ENCODE measurements at regions of chr1 and their contacts with region 1.

Region 1: GRCh38 chr1:53837924-53838652 is at the start of gene NDC1:
- DNase-seq: peak; percentile 84 to 95 (median 92)
- ATAC-seq: peak; percentile 95
- H3K4me3 ChIP-seq: peak within 1 kb of the TSS; percentile 92
- H3K4me3 Mint-ChIP-seq: peak within 1 kb of the TSS; percentile 96 to 100 (median 99)
- H3K27ac ChIP-seq: peak within 1 kb of the TSS; percentile 95
- H3K27ac Mint-ChIP-seq: peak within 1 kb of the TSS; percentile 96 to 99 (median 98)
- H3K4me1 ChIP-seq: no peaks in the 10 kb centered on the region
- H3K4me1 Mint-ChIP-seq: peaks cover 10 to 41% (median 30%) of the 10 kb centered on the region in 7 donors
- H3K27me3 ChIP-seq: no peaks in the 10 kb centered on the region
- H3K27me3 Mint-ChIP-seq: no peaks in the 10 kb centered on the region
- total RNA-seq, gene NDC1: 6.9 to 20.2 (median 13.2) TPM

Region 2: DNA sequence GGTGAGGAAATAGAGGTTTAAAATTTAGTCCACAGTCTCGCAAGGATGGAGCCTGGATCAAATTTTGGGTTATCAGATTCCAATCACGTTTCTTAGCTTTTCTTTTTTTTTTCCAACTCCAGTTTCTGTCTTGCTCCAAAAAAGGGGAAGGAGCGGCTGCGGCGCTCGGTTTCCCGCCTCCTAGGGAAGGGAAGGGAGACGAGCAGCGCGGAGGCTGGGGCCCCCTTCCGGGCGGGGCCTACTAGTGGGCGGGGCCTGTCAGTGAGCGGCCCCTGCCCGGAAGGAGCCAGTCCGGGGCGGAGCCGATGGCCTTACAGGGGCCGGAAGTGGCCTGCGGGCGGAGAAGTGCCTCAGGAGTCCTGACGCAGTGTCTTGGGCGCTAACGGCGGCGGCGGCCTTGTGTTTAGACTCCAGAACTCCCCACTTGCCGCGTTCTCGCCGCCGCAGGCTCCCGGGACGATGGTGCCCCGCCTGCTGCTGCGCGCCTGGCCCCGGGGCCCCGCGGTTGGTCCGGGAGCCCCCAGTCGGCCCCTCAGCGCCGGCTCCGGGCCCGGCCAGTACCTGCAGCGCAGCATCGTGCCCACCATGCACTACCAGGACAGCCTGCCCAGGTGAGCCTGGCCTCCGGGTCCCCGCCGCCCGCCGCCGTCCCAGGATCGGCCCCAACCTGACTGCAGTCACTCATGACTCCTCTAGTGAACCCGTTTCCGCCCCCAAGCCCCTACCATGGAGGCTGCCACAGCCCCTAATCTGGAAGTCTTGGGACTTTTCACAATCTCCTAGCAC is 641.4 kb before region 1 on chr1 and contains the start of gene CPT2:
- CTCF ChIA-PET with region 1: no interaction called
- POLR2A ChIA-PET with region 1: no interaction called
- intact Hi-C with region 1: loop called (anchors 2 to 5 kb)
- DNase-seq: peak; percentile 78 to 94 (median 89)
- ATAC-seq: peak; percentile 99
- H3K4me3 ChIP-seq: peak within 1 kb of the TSS; percentile 91
- H3K4me3 Mint-ChIP-seq: peak within 1 kb of the TSS; percentile 88 to 100 (median 98)
- H3K27ac ChIP-seq: peak within 1 kb of the TSS; percentile 98
- H3K27ac Mint-ChIP-seq: peak within 1 kb of the TSS; percentile 90 to 100 (median 97)
- H3K4me1 ChIP-seq: peaks cover 16 to 20% of the 10 kb centered on the region in 2 donors
- H3K4me1 Mint-ChIP-seq: peaks cover 13 to 48% (median 44%) of the 10 kb centered on the region in 7 donors
- H3K27me3 ChIP-seq: no peaks in the 10 kb centered on the region
- H3K27me3 Mint-ChIP-seq: no peaks in the 10 kb centered on the region
- total RNA-seq, gene CPT2: 8.8 to 23.0 (median 13.4) TPM

Region 3: DNA sequence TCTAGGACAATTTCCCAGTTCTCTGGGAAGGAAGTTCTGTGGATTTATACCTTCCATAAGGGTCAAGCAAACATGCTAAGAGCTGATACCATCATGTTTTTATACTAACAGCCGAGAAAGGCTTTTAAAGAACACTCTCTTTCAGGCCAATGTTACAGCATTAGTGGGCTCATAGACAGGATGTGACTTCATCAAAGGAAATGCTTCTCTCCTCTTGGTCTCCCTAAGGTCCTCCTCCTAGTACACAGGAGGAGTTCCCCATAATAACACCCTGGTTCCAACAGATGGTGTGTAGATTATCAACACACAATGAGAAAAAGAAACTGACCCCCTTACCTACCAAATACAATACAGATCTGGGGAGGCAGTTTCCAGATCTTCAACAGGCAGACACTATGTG is 72.4 kb before region 1 on chr1:
- CTCF ChIA-PET with region 1: no interaction called
- POLR2A ChIA-PET with region 1: no interaction called
- intact Hi-C with region 1: loop called in 1 of 2 experiments (anchors 1 kb)
- DNase-seq: no peak
- ATAC-seq: peak; percentile 73
- H3K4me3 ChIP-seq: no peak overlapping the region
- H3K4me3 Mint-ChIP-seq: peak overlapping the region in 1 of 10 donors; percentile 77
- H3K27ac ChIP-seq: no peak overlapping the region
- H3K27ac Mint-ChIP-seq: peak overlapping the region in 2 of 9 donors; percentile 56 to 93
- H3K4me1 ChIP-seq: no peaks in the 10 kb centered on the region
- H3K4me1 Mint-ChIP-seq: peaks cover 0 to 29% (median 0%) of the 10 kb centered on the region in 7 donors
- H3K27me3 ChIP-seq: no peaks in the 10 kb centered on the region
- H3K27me3 Mint-ChIP-seq: no peaks in the 10 kb centered on the region

Region 4: DNA sequence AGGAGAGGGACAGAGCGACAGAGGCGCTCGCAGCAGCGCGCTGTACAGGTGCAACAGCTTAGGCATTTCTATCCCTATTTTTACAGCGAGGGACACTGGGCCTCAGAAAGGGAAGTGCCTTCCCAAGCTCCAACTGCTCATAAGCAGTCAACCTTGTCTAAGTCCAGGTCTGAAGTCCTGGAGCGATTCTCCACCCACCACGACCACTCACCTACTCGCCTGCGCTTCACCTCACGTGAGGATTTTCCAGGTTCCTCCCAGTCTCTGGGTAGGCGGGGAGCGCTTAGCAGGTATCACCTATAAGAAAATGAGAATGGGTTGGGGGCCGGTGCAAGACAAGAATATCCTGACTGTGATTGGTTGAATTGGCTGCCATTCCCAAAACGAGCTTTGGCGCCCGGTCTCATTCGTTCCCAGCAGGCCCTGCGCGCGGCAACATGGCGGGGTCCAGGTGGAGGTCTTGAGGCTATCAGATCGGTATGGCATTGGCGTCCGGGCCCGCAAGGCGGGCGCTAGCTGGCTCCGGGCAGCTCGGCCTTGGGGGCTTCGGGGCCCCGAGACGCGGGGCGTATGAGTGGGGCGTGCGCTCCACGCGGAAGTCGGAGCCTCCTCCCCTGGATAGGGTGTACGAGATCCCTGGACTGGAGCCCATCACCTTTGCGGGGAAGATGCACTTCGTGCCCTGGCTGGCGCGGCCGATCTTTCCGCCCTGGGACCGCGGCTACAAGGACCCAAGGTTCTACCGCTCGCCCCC is 361.9 kb after region 1 on chr1 and contains the starts of genes CYB5RL and MRPL37:
- CTCF ChIA-PET with region 1: no interaction called
- POLR2A ChIA-PET with region 1: no interaction called
- intact Hi-C with region 1: loop called (anchors 1 to 10 kb)
- DNase-seq: peak; percentile 65 to 94 (median 91)
- ATAC-seq: peak; percentile 99
- H3K4me3 ChIP-seq: peak within 1 kb of the TSS; percentile 69
- H3K4me3 Mint-ChIP-seq: peak within 1 kb of the TSS; percentile 90 to 96 (median 92)
- H3K27ac ChIP-seq: peak within 1 kb of the TSS; percentile 81
- H3K27ac Mint-ChIP-seq: peak within 1 kb of the TSS; percentile 64 to 93 (median 87)
- H3K4me1 ChIP-seq: peaks cover 9 to 17% of the 10 kb centered on the region in 2 donors
- H3K4me1 Mint-ChIP-seq: peaks cover 27 to 44% (median 40%) of the 10 kb centered on the region in 7 donors
- H3K27me3 ChIP-seq: no peaks in the 10 kb centered on the region
- H3K27me3 Mint-ChIP-seq: no peaks in the 10 kb centered on the region
- total RNA-seq, gene CYB5RL: 5.1 to 13.5 (median 7.1) TPM
- total RNA-seq, gene MRPL37: 25.4 to 86.7 (median 36.4) TPM

Region 5: DNA sequence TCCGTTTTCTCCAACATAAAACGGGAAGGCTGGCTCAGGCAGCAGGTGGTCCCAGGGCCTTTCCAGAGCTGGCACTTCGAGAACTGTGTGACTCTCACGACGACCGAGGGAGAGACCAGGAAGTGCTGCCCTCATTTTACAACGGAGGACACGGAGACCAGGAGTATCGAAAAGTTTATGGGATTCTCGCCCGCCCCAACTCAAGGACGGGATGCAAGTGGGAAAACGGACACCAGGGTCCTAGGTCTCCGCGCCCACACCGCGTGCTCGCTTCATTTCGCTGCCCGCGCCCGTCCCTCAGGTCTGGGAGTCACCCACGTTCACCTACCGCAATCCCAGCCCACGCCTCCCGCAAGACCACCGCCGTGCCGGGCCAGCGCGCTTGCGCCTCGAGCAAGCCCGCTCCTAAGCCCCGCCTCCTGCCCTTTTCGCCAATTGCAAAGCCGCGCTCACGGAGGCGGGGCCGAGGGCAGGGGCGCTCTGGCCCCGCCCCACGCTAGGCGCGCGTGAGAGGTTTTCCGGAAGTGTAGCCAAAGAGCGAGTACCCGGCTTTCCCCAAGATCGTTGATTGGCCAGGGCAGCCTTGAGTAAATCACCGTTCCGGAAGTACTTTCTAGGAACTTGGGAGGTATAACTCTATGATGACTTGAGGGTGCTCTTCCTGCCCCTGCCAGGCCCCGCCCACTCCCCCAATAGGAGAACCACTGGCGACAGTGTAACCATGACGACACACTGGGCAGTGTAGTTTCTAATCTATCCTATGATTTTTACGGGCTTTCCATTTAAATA is 926.2 kb after region 1 on chr1 and contains the start of gene PARS2:
- CTCF ChIA-PET with region 1: no interaction called
- POLR2A ChIA-PET with region 1: no interaction called
- intact Hi-C with region 1: loop called in 1 of 2 experiments (anchors 1 kb)
- DNase-seq: peak; percentile 89 to 98 (median 97)
- ATAC-seq: peak; percentile 96
- H3K4me3 ChIP-seq: peak within 1 kb of the TSS; percentile 95
- H3K4me3 Mint-ChIP-seq: peak within 1 kb of the TSS; percentile 94 to 97 (median 96)
- H3K27ac ChIP-seq: peak within 1 kb of the TSS; percentile 83
- H3K27ac Mint-ChIP-seq: peak within 1 kb of the TSS; percentile 81 to 97 (median 93)
- H3K4me1 ChIP-seq: peaks cover 0 to 9% of the 10 kb centered on the region in 2 donors
- H3K4me1 Mint-ChIP-seq: peaks cover 14 to 26% (median 24%) of the 10 kb centered on the region in 7 donors
- H3K27me3 ChIP-seq: no peaks in the 10 kb centered on the region
- H3K27me3 Mint-ChIP-seq: no peaks in the 10 kb centered on the region
- total RNA-seq, gene PARS2: 0.66 to 7.6 (median 4.7) TPM